ENCODE measurements at regions of chr1 and their contacts with region 1.

Region 1: DNA sequence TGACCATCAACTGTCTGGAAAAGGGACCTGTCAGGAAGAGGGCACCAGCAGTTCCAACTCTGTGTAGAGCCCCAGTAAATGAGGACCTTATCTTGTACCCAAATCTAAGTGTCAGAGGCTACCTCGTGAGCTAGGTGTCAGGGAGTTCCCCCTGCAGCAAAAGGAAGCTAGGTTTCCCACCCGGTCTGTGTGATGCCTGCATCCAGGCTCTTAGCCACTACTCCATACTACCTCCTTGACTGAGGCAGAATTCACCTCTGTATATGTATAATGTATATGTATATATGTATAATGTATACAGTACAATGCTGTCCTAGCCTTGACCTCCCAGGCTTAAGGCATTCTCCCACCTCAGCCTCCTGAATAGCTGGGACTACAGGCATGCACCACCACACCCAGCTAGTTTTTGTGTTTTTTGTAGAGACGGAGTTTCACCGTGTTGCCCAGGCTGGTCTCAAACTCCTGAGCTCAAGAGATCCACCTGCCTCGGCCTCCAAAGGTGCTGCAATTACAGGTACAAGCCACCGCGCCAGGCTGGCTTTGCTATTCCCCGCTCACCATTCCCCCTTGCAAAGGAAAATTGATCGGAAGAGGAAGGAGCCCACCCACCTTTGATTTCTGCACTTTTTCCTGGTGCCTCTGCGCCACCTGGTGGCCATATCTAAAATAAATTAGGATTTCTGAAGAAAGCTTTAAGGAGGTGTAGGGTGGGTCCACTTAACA is 15.7 kb upstream of the LUZP1 start:
- DNase-seq: no peak
- ATAC-seq: peak; percentile 76
- H3K4me3 ChIP-seq: no peak overlapping the region
- H3K27ac ChIP-seq: no peak overlapping the region
- H3K4me1 ChIP-seq: no peaks in the 10 kb centered on the region; the same call in 1 of the 2 replicates
- H3K27me3 ChIP-seq: no peaks in the 10 kb centered on the region
- CTCF ChIP-seq: peak; percentile 51 to 76 (median 52); a peak in 5 of 6 replicates
- EP300 ChIP-seq: no peak
- POLR2A ChIP-seq: no peak
- RAD21 ChIP-seq: peak; percentile 97

Region 2: GRCh38 chr1:22936681-22937080 is 247.7 kb before region 1 on chr1:
- CTCF ChIA-PET with region 1: no interaction called
- POLR2A ChIA-PET with region 1: no interaction called
- RAD21 ChIA-PET with region 1: no interaction called
- SMC1A ChIA-PET with region 1: no interaction called
- in situ Hi-C with region 1: no loop called
- intact Hi-C with region 1: no loop called
- DNase-seq: no peak
- ATAC-seq: no peak
- H3K4me3 ChIP-seq: no peak overlapping the region
- H3K27ac ChIP-seq: no peak overlapping the region
- H3K4me1 ChIP-seq: no peaks in the 10 kb centered on the region
- H3K27me3 ChIP-seq: no peaks in the 10 kb centered on the region; a peak in 1 of 4 replicates
- CTCF ChIP-seq: no peak
- EP300 ChIP-seq: no peak
- POLR2A ChIP-seq: no peak
- RAD21 ChIP-seq: no peak

Region 3: DNA sequence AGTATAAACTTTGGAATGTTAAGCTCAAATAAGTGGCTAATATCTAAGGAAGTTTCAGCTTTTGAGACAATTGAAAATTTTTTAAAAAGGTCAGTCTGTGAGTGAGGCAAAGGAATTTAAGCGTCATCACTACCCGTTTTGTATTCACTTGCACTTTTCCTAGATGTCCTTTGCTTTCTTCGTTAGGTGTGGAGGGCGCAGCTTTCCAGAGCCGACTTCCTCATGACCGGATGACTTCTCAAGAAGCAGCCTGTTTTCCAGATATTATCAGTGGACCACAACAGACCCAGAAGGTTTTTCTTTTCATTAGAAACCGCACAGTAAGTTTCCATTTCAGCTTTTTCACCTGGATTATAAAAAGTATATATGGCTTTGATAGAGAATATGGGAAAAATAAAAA is 134.2 kb before region 1 on chr1:
- CTCF ChIA-PET with region 1: interaction called, 11 read pairs
- POLR2A ChIA-PET with region 1: no interaction called
- RAD21 ChIA-PET with region 1: interaction called, 8 read pairs
- SMC1A ChIA-PET with region 1: interaction called, 8 read pairs
- in situ Hi-C with region 1: no loop called
- intact Hi-C with region 1: no loop called
- DNase-seq: no peak
- ATAC-seq: no peak
- H3K4me3 ChIP-seq: no peak overlapping the region
- H3K27ac ChIP-seq: no peak overlapping the region
- H3K4me1 ChIP-seq: no peaks in the 10 kb centered on the region; the same call in 1 of the 2 replicates
- H3K27me3 ChIP-seq: no peaks in the 10 kb centered on the region
- CTCF ChIP-seq: no peak
- EP300 ChIP-seq: no peak
- POLR2A ChIP-seq: no peak
- RAD21 ChIP-seq: no peak

Region 4: GRCh38 chr1:23098463-23099170 is 85.8 kb before region 1 on chr1:
- CTCF ChIA-PET with region 1: interaction called, 961 read pairs
- POLR2A ChIA-PET with region 1: interaction called, 31 read pairs
- RAD21 ChIA-PET with region 1: interaction called, 338 read pairs
- SMC1A ChIA-PET with region 1: interaction called, 455 read pairs
- in situ Hi-C with region 1: loop called (anchors 5 kb)
- intact Hi-C with region 1: loop called (anchors 1 kb)
- DNase-seq: no peak
- ATAC-seq: peak; percentile 78
- H3K4me3 ChIP-seq: no peak overlapping the region
- H3K27ac ChIP-seq: no peak overlapping the region
- H3K4me1 ChIP-seq: no peaks in the 10 kb centered on the region
- H3K27me3 ChIP-seq: no peaks in the 10 kb centered on the region
- CTCF ChIP-seq: peak; percentile 88 to 98 (median 90)
- EP300 ChIP-seq: no peak
- POLR2A ChIP-seq: no peak
- RAD21 ChIP-seq: peak; percentile 98

Region 5: GRCh38 chr1:23122023-23122748 is 62.2 kb before region 1 on chr1:
- CTCF ChIA-PET with region 1: interaction called, 42 read pairs
- POLR2A ChIA-PET with region 1: interaction called, 5 read pairs
- RAD21 ChIA-PET with region 1: interaction called, 19 read pairs
- SMC1A ChIA-PET with region 1: interaction called, 199 read pairs
- in situ Hi-C with region 1: no loop called
- intact Hi-C with region 1: no loop called
- DNase-seq: no peak
- ATAC-seq: peak; percentile 23; the same call in 2 of the 3 replicates
- H3K4me3 ChIP-seq: no peak overlapping the region
- H3K27ac ChIP-seq: no peak overlapping the region
- H3K4me1 ChIP-seq: peaks cover 29% of the 10 kb centered on the region
- H3K27me3 ChIP-seq: no peaks in the 10 kb centered on the region
- CTCF ChIP-seq: no peak
- EP300 ChIP-seq: no peak
- POLR2A ChIP-seq: no peak
- RAD21 ChIP-seq: no peak

Region 6: GRCh38 chr1:23168457-23169194 is 15.7 kb before region 1 on chr1 and contains the start of gene LUZP1:
- CTCF ChIA-PET with region 1: interaction called, 39 read pairs
- POLR2A ChIA-PET with region 1: no interaction called
- RAD21 ChIA-PET with region 1: interaction called, 24 read pairs
- SMC1A ChIA-PET with region 1: interaction called, 23 read pairs
- in situ Hi-C with region 1: no loop called
- intact Hi-C with region 1: no loop called
- DNase-seq: no peak
- ATAC-seq: peak; percentile 87
- H3K4me3 ChIP-seq: peak within 1 kb of the TSS; percentile 95
- H3K27ac ChIP-seq: peak within 1 kb of the TSS; percentile 50
- H3K4me1 ChIP-seq: peaks cover 7% of the 10 kb centered on the region
- H3K27me3 ChIP-seq: no peaks in the 10 kb centered on the region
- CTCF ChIP-seq: no peak
- EP300 ChIP-seq: no peak
- POLR2A ChIP-seq: peak; percentile 89
- RAD21 ChIP-seq: no peak
- polyA plus RNA-seq, gene LUZP1: 11.3 to 17.1 TPM

Region 7: GRCh38 chr1:23533246-23534023 is 349.1 kb after region 1 on chr1:
- CTCF ChIA-PET with region 1: no interaction called
- POLR2A ChIA-PET with region 1: no interaction called
- RAD21 ChIA-PET with region 1: no interaction called
- SMC1A ChIA-PET with region 1: no interaction called
- in situ Hi-C with region 1: no loop called
- intact Hi-C with region 1: no loop called
- DNase-seq: no peak
- ATAC-seq: peak; percentile 2
- H3K4me3 ChIP-seq: no peak overlapping the region
- H3K27ac ChIP-seq: 0 out of 2 replicates have a peak overlapping the region, but pooled peaks have one; percentile 11
- H3K4me1 ChIP-seq: peaks cover 39% of the 10 kb centered on the region
- H3K27me3 ChIP-seq: no peaks in the 10 kb centered on the region
- CTCF ChIP-seq: no peak
- EP300 ChIP-seq: no peak
- POLR2A ChIP-seq: no peak
- RAD21 ChIP-seq: no peak

Measured in GM12878 (cell line).